ENCODE measurements at regions of chr11 and their contacts with region 1.

Region 1: GRCh38 chr11:117946842-117947526 is 17.8 kb upstream of the TMPRSS13 start:
- DNase-seq: peak; percentile 66 to 86 (median 78)
- H3K4me3 ChIP-seq: no peak overlapping the region
- H3K4me3 Mint-ChIP-seq: peak overlapping the region; percentile 0 to 66 (median 50)
- H3K27ac ChIP-seq: no peak overlapping the region
- H3K27ac Mint-ChIP-seq: peak overlapping the region; percentile 43 to 95 (median 72)
- H3K4me1 ChIP-seq: peaks cover 58% of the 10 kb centered on the region
- H3K4me1 Mint-ChIP-seq: peaks cover 53 to 76% (median 76%) of the 10 kb centered on the region in 3 donors
- H3K27me3 ChIP-seq: no peaks in the 10 kb centered on the region
- H3K27me3 Mint-ChIP-seq: peaks cover 0 to 3% of the 10 kb centered on the region in 2 donors

Region 2: GRCh38 chr11:117807482-117808327 is 139.3 kb before region 1 on chr11:
- CTCF ChIA-PET with region 1: interaction called, 52 read pairs
- POLR2A ChIA-PET with region 1: interaction called, 5 read pairs
- DNase-seq: peak; percentile 48 to 82 (median 73)
- H3K4me3 ChIP-seq: no peak overlapping the region
- H3K4me3 Mint-ChIP-seq: no peak overlapping the region
- H3K27ac ChIP-seq: no peak overlapping the region
- H3K27ac Mint-ChIP-seq: peak overlapping the region in 3 of 8 donors; percentile 33 to 92 (median 71)
- H3K4me1 ChIP-seq: peaks cover 4% of the 10 kb centered on the region
- H3K4me1 Mint-ChIP-seq: peaks cover 7 to 13% (median 11%) of the 10 kb centered on the region in 3 donors
- H3K27me3 ChIP-seq: no peaks in the 10 kb centered on the region
- H3K27me3 Mint-ChIP-seq: peaks cover 0 to 2% of the 10 kb centered on the region in 2 donors

Region 3: GRCh38 chr11:117828611-117829368 is 118.2 kb before region 1 on chr11:
- CTCF ChIA-PET with region 1: interaction called, 255 read pairs
- POLR2A ChIA-PET with region 1: interaction called, 6 read pairs
- DNase-seq: peak; percentile 51 to 95 (median 71)
- H3K4me3 ChIP-seq: no peak overlapping the region
- H3K4me3 Mint-ChIP-seq: peak overlapping the region; percentile 7 to 89 (median 57)
- H3K27ac ChIP-seq: peak overlapping the region; percentile 21
- H3K27ac Mint-ChIP-seq: peak overlapping the region; percentile 88 to 97 (median 94)
- H3K4me1 ChIP-seq: peaks cover 46% of the 10 kb centered on the region
- H3K4me1 Mint-ChIP-seq: peaks cover 65 to 83% (median 67%) of the 10 kb centered on the region in 3 donors
- H3K27me3 ChIP-seq: no peaks in the 10 kb centered on the region
- H3K27me3 Mint-ChIP-seq: peaks cover 0 to 2% of the 10 kb centered on the region in 2 donors

Region 4: DNA sequence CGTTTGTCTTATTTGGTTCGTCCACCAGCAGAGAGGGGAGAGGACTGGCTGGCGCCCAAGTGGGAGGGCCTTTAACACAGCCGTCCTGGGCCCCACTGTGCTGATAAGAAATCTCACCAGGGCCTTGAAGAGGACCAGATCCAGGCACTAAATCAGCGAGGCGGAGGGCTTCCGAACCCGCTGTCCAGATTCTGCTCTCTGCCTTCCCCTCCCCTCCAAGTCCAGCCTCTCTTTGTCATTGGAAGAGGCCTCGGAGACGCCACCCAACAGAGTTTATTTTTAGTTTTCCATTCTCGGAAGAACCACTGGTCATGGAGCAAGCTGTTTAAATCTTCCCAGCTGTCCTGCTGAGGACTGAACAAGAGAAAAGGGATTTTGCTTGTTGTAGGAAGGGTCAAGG is 61.2 kb before region 1 on chr11:
- CTCF ChIA-PET with region 1: no interaction called
- POLR2A ChIA-PET with region 1: no interaction called
- DNase-seq: no peak
- H3K4me3 ChIP-seq: no peak overlapping the region
- H3K4me3 Mint-ChIP-seq: no peak overlapping the region
- H3K27ac ChIP-seq: no peak overlapping the region
- H3K27ac Mint-ChIP-seq: peak overlapping the region in 1 of 8 donors; percentile 86
- H3K4me1 ChIP-seq: no peaks in the 10 kb centered on the region
- H3K4me1 Mint-ChIP-seq: no peaks in the 10 kb centered on the region
- H3K27me3 ChIP-seq: no peaks in the 10 kb centered on the region
- H3K27me3 Mint-ChIP-seq: peaks cover 9 to 22% of the 10 kb centered on the region in 2 donors

Region 5: DNA sequence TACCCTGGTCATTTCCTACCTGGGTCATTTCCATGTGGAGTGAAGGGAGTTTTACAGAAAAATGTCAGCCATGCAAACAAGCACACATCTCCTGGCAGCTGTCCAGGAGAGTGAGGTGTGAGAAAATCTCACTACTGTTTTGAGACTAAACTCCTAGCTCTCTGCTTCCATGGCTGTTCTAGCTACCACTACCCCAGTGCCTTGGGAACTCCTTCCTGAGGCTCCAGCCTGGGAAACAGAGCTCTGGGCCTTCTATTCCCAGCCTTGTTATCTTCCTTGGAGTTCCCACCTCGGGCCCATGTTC is 15.0 kb before region 1 on chr11:
- CTCF ChIA-PET with region 1: interaction called, 32 read pairs
- POLR2A ChIA-PET with region 1: no interaction called
- DNase-seq: peak in 4 of 5 donors; percentile 20 to 65 (median 30)
- H3K4me3 ChIP-seq: no peak overlapping the region
- H3K4me3 Mint-ChIP-seq: peak overlapping the region in 5 of 7 donors; percentile 32 to 80 (median 60)
- H3K27ac ChIP-seq: no peak overlapping the region
- H3K27ac Mint-ChIP-seq: peak overlapping the region in 6 of 8 donors; percentile 57 to 89 (median 75)
- H3K4me1 ChIP-seq: peaks cover 44% of the 10 kb centered on the region
- H3K4me1 Mint-ChIP-seq: peaks cover 50 to 62% (median 58%) of the 10 kb centered on the region in 3 donors
- H3K27me3 ChIP-seq: no peaks in the 10 kb centered on the region
- H3K27me3 Mint-ChIP-seq: peaks cover 0 to 2% of the 10 kb centered on the region in 2 donors

Region 6: DNA sequence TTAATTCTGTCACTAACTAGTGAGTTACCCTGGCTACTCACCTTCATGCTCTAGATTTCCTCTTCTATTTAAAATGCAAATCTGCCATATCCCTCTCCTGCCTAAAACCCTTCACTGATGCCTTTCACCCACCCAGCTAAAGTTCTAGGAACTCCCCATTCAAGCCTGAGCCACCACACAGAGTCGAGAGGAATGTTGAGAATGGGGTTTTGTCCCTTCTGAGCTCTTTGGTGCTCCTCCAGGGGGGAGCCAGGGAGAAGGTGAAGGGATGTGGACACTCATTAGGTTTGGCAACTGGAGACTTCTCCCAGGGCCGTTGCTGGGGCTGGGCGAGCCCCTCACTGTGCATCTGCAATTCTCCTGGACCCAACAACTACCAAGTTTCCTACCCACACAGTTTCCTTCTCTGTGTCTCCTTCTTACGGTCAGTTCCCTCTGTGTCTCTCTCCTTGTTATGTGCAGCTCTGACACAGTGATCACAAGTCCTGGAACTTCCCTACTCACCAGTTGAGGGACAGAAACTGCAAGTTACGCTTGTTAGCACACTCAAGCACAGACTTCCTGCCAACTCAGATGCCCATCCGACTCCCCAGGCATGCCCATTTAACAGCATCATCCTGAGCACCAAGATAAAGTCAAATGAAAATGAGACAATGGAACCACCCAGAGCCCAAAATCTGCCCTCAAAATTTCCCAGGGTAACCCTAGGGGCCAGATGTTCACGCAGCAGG is 32.7 kb after region 1 on chr11:
- CTCF ChIA-PET with region 1: interaction called, 296 read pairs
- POLR2A ChIA-PET with region 1: interaction called, 108 read pairs
- DNase-seq: no peak
- H3K4me3 ChIP-seq: no peak overlapping the region
- H3K4me3 Mint-ChIP-seq: peak overlapping the region; percentile 22 to 79 (median 59)
- H3K27ac ChIP-seq: no peak overlapping the region
- H3K27ac Mint-ChIP-seq: peak overlapping the region; percentile 59 to 89 (median 81)
- H3K4me1 ChIP-seq: peaks cover 56% of the 10 kb centered on the region
- H3K4me1 Mint-ChIP-seq: peaks cover 76 to 85% (median 84%) of the 10 kb centered on the region in 3 donors
- H3K27me3 ChIP-seq: no peaks in the 10 kb centered on the region
- H3K27me3 Mint-ChIP-seq: no peaks in the 10 kb centered on the region

Region 7: DNA sequence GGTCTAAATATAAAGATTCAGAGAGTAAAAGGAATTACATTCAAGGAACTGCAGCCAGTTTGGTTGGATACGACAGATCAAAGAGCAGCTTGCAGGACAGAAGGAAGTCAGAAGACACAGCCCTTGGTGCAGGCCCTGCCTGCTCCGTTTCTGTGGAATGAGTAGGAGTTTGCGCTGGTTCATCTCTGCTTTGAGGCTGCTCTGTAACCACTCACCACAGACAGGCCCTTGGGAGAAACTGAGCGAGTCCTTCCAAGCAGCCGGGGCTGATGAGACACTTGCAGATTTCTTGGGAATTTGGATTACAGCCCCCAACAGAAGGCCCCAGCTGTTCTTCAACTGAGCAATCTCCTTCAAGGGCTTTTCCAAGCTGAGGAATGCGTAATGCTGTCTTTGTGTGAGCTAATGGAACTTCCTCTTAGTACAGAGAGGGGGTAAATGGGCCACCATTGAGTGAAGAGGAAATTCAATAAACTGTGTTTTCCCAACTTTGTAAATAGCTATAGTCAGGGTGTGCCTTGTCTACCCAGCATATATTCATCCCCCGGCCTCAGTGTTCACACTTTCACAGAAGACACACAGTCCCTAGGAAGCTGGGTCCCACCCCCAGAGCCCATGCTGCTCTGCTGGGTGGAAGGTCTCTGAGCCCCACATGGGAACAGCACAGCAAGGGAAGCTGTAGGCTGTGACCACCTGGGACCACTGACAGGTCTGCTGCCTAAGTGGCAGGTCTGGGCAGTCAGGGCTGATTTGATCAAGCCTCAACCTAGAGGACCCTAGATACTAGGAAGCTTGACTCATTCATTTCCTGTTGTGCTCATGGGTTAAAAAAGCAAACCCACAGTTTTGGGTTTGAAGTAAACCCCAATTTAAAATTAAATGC is 55.8 kb after region 1 on chr11:
- CTCF ChIA-PET with region 1: interaction called, 296 read pairs
- POLR2A ChIA-PET with region 1: interaction called, 100 read pairs
- DNase-seq: peak in 2 of 5 donors; percentile 37 to 62
- H3K4me3 ChIP-seq: peak overlapping the region; percentile 13
- H3K4me3 Mint-ChIP-seq: peak overlapping the region; percentile 48 to 85 (median 60)
- H3K27ac ChIP-seq: peak overlapping the region; percentile 72
- H3K27ac Mint-ChIP-seq: peak overlapping the region; percentile 88 to 100 (median 94)
- H3K4me1 ChIP-seq: peaks cover 93% of the 10 kb centered on the region
- H3K4me1 Mint-ChIP-seq: peaks cover 94 to 100% (median 98%) of the 10 kb centered on the region in 3 donors
- H3K27me3 ChIP-seq: no peaks in the 10 kb centered on the region
- H3K27me3 Mint-ChIP-seq: no peaks in the 10 kb centered on the region

Measured in CD8-positive, alpha-beta memory T cell (primary cell).